Caco-2 (cell line): ENCODE measurements at regions of chr11 and their contacts with region 1.

Region 1: GRCh38 chr11:19951558-19952115 is 208.6 kb downstream of the DBX1 start:
- DNase-seq: peak in 1 of 2 experiments; percentile 72
- H3K4me3 ChIP-seq: no peak overlapping the region
- H3K4me3 Mint-ChIP-seq: peak overlapping the region; percentile 59
- H3K27ac Mint-ChIP-seq: peak overlapping the region; percentile 71
- H3K4me1 ChIP-seq: peaks cover 36% of the 10 kb centered on the region
- H3K4me1 Mint-ChIP-seq: peaks cover 36% of the 10 kb centered on the region
- H3K27me3 ChIP-seq: no peaks in the 10 kb centered on the region
- H3K27me3 Mint-ChIP-seq: no peaks in the 10 kb centered on the region
- CTCF ChIP-seq: peak; percentile 55 to 61

Region 2: DNA sequence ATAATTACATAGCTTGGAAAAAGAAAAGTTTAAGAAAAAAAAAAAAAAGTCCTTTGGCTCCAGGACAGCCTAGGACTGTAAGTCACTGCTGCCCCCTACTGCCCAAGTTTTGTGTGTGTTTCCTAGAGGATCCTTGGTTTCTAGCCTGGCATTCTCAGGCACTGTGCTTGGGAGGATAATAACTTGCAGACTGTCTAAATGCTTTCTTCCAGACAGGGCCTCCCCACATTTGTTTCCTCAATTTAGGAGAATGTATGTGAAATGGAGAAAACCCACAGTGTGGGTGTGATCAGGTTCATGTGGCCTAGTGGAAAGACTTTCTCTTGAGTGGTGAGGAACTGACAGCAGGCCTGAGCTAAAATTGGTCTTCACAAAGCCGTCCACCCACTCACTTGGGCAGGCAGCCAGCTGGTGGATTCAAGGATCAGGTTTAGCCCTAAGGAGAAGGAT is 48.0 kb before region 1 on chr11:
- CTCF ChIA-PET with region 1: interaction called, 9 read pairs
- POLR2A ChIA-PET with region 1: no interaction called
- intact Hi-C with region 1: loop called (anchors 1 kb)
- DNase-seq: peak; percentile 78 to 86
- H3K4me3 ChIP-seq: no peak overlapping the region
- H3K4me3 Mint-ChIP-seq: no peak overlapping the region
- H3K27ac Mint-ChIP-seq: no peak overlapping the region
- H3K4me1 ChIP-seq: peaks cover 13% of the 10 kb centered on the region; the same call in 1 of the 2 replicates
- H3K4me1 Mint-ChIP-seq: peaks cover 10% of the 10 kb centered on the region
- H3K27me3 ChIP-seq: no peaks in the 10 kb centered on the region
- H3K27me3 Mint-ChIP-seq: no peaks in the 10 kb centered on the region
- CTCF ChIP-seq: peak; percentile 86 to 91

Region 3: DNA sequence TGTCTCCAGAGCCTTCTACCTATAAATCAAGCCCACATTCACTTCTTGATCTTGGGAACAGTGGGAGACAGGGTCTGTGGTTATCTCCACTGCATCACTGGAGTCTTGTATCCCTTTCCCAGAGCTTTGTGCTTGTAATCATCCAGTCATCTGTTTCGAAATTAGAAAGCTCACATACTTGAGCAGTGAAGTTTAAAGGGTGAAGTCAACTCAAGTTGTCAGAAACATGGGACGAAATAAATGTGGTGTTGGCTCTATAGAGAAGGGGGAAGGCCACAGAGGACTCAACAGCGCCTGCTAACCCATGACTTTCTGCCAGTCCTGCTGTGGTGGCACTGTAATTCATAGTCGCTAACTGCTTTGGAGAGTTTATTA is 11.2 kb after region 1 on chr11:
- CTCF ChIA-PET with region 1: interaction called, 14 read pairs
- POLR2A ChIA-PET with region 1: no interaction called
- intact Hi-C with region 1: no loop called
- DNase-seq: no peak
- H3K4me3 ChIP-seq: no peak overlapping the region
- H3K4me3 Mint-ChIP-seq: no peak overlapping the region
- H3K27ac Mint-ChIP-seq: no peak overlapping the region
- H3K4me1 ChIP-seq: peaks cover 8% of the 10 kb centered on the region
- H3K4me1 Mint-ChIP-seq: peaks cover 10% of the 10 kb centered on the region
- H3K27me3 ChIP-seq: no peaks in the 10 kb centered on the region
- H3K27me3 Mint-ChIP-seq: no peaks in the 10 kb centered on the region
- CTCF ChIP-seq: no peak

Region 4: GRCh38 chr11:20002312-20003216 is 50.9 kb after region 1 on chr11:
- CTCF ChIA-PET with region 1: interaction called, 5 read pairs
- POLR2A ChIA-PET with region 1: no interaction called
- intact Hi-C with region 1: loop called (anchors 1 kb)
- DNase-seq: peak; percentile 84 to 92
- H3K4me3 ChIP-seq: no peak overlapping the region
- H3K4me3 Mint-ChIP-seq: peak overlapping the region; percentile 52
- H3K27ac Mint-ChIP-seq: peak overlapping the region; percentile 65
- H3K4me1 ChIP-seq: peaks cover 48% of the 10 kb centered on the region
- H3K4me1 Mint-ChIP-seq: peaks cover 42% of the 10 kb centered on the region
- H3K27me3 ChIP-seq: no peaks in the 10 kb centered on the region
- H3K27me3 Mint-ChIP-seq: no peaks in the 10 kb centered on the region
- CTCF ChIP-seq: no peak

Region 5: DNA sequence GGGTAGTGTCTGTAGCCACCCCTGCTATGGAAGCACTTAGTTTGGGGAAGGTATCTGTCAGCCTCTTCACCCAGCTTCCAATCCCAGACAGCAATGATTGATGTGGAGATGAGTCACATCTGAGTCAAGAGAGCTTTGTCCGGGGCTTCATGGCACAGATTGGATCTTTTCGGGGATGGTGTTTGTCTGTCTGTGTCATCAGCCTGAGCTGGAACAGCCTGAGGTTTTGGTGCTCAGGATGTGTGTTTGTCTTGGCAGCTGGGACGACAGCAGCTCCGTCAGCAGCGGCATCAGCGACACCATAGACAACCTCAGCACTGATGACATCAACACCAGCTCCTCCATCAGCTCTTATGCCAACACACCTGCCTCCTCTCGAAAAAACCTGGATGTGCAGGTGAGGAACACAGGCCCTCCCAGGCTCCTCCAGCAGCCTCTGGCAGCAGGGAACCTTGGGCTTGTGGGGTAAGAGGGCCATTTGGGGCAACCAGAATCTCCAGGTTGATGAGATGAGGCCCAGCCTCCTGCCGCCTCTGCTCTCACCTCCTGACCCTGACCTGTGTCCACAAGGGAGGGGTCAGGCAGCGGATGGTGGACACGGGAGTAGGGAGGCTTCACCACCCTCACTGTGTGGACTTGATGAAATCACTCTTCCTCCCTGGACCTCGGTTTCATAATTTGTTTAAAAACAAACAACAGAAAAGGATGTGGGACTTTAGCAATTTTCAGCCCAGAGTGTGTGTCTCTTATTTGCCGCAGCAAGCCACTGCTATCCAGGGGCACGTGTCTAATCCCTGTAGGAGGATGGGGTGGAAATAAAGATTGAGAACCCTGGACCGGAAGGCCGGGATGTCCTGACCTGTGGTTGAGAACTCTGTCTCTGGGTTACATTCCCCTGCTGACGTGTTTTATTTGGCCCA is 84.3 kb after region 1 on chr11:
- CTCF ChIA-PET with region 1: interaction called, 13 read pairs
- POLR2A ChIA-PET with region 1: no interaction called
- intact Hi-C with region 1: loop called (anchors 1 kb)
- DNase-seq: no peak
- H3K4me3 ChIP-seq: no peak overlapping the region
- H3K4me3 Mint-ChIP-seq: no peak overlapping the region
- H3K27ac Mint-ChIP-seq: peak overlapping the region; percentile 91
- H3K4me1 ChIP-seq: peaks cover 85% of the 10 kb centered on the region
- H3K4me1 Mint-ChIP-seq: peaks cover 70% of the 10 kb centered on the region
- H3K27me3 ChIP-seq: no peaks in the 10 kb centered on the region
- H3K27me3 Mint-ChIP-seq: no peaks in the 10 kb centered on the region
- CTCF ChIP-seq: no peak

Region 6: GRCh38 chr11:20110908-20111669 is 159.5 kb after region 1 on chr11:
- CTCF ChIA-PET with region 1: no interaction called
- POLR2A ChIA-PET with region 1: no interaction called
- intact Hi-C with region 1: loop called (anchors 1 kb)
- DNase-seq: peak; percentile 78 to 86
- H3K4me3 ChIP-seq: no peak overlapping the region
- H3K4me3 Mint-ChIP-seq: no peak overlapping the region
- H3K27ac Mint-ChIP-seq: no peak overlapping the region
- H3K4me1 ChIP-seq: 0 out of 2 replicates have a peak, but pooled peaks cover 3% of the 10 kb centered on the region
- H3K4me1 Mint-ChIP-seq: no peaks in the 10 kb centered on the region
- H3K27me3 ChIP-seq: no peaks in the 10 kb centered on the region
- H3K27me3 Mint-ChIP-seq: no peaks in the 10 kb centered on the region
- CTCF ChIP-seq: peak; percentile 91 to 95

Region 7: GRCh38 chr11:20337526-20338154 is 386.0 kb after region 1 on chr11:
- CTCF ChIA-PET with region 1: no interaction called
- POLR2A ChIA-PET with region 1: no interaction called
- intact Hi-C with region 1: loop called (anchors 5 kb)
- DNase-seq: peak in 1 of 2 experiments; percentile 43
- H3K4me3 ChIP-seq: no peak overlapping the region
- H3K4me3 Mint-ChIP-seq: no peak overlapping the region
- H3K27ac Mint-ChIP-seq: no peak overlapping the region
- H3K4me1 ChIP-seq: no peaks in the 10 kb centered on the region
- H3K4me1 Mint-ChIP-seq: peaks cover 7% of the 10 kb centered on the region
- H3K27me3 ChIP-seq: no peaks in the 10 kb centered on the region
- H3K27me3 Mint-ChIP-seq: peaks cover 4% of the 10 kb centered on the region
- CTCF ChIP-seq: peak; percentile 63 to 70